AG04450 (cell line): ENCODE measurements at regions of chr16 and their contacts with region 1.

Region 1: GRCh38 chr16:68396481-68396880 is 51.8 kb downstream of the SMPD3 start:
- DNase-seq: peak; percentile 16
- H3K4me3 ChIP-seq: no peak overlapping the region
- H3K27ac ChIP-seq: no peak overlapping the region
- H3K27me3 ChIP-seq: peaks cover 24% of the 10 kb centered on the region
- CTCF ChIP-seq: peak; percentile 74

Region 2: GRCh38 chr16:68406451-68407152 is 10.1 kb after region 1 on chr16:
- CTCF ChIA-PET with region 1: interaction called, 46 read pairs
- POLR2A ChIA-PET with region 1: no interaction called
- DNase-seq: no peak
- H3K4me3 ChIP-seq: peak overlapping the region; percentile 31
- H3K27ac ChIP-seq: no peak overlapping the region
- H3K27me3 ChIP-seq: peaks cover 8% of the 10 kb centered on the region
- CTCF ChIP-seq: no peak

Region 3: GRCh38 chr16:68412061-68412460 is 15.6 kb after region 1 on chr16:
- CTCF ChIA-PET with region 1: interaction called, 46 read pairs
- POLR2A ChIA-PET with region 1: no interaction called
- DNase-seq: no peak
- H3K4me3 ChIP-seq: no peak overlapping the region
- H3K27ac ChIP-seq: no peak overlapping the region
- H3K27me3 ChIP-seq: peaks cover 36% of the 10 kb centered on the region
- CTCF ChIP-seq: no peak

Region 4: GRCh38 chr16:68512183-68512582 is 115.7 kb after region 1 on chr16:
- CTCF ChIA-PET with region 1: interaction called, 87 read pairs
- POLR2A ChIA-PET with region 1: no interaction called
- DNase-seq: no peak
- H3K4me3 ChIP-seq: no peak overlapping the region
- H3K27ac ChIP-seq: no peak overlapping the region
- H3K27me3 ChIP-seq: peaks cover 2% of the 10 kb centered on the region
- CTCF ChIP-seq: no peak

Region 5: GRCh38 chr16:68520649-68521086 is 124.2 kb after region 1 on chr16:
- CTCF ChIA-PET with region 1: interaction called, 23 read pairs
- POLR2A ChIA-PET with region 1: no interaction called
- DNase-seq: peak; percentile 18
- H3K4me3 ChIP-seq: peak overlapping the region; percentile 46
- H3K27ac ChIP-seq: no peak overlapping the region
- H3K27me3 ChIP-seq: no peaks in the 10 kb centered on the region
- CTCF ChIP-seq: peak; percentile 98